ENCODE measurements at regions of chr19 and their contacts with region 1.

Region 1: GRCh38 chr19:50922317-50922853 is 11.2 kb upstream of the KLK4 start:
- DNase-seq: peak; percentile 89
- CTCF ChIP-seq: peak; percentile 89

Region 2: GRCh38 chr19:50669302-50670101 is 252.9 kb before region 1 on chr19:
- CTCF ChIA-PET with region 1: interaction called, 14 read pairs
- POLR2A ChIA-PET with region 1: no interaction called
- DNase-seq: peak; percentile 59
- CTCF ChIP-seq: peak; percentile 64

Region 3: DNA sequence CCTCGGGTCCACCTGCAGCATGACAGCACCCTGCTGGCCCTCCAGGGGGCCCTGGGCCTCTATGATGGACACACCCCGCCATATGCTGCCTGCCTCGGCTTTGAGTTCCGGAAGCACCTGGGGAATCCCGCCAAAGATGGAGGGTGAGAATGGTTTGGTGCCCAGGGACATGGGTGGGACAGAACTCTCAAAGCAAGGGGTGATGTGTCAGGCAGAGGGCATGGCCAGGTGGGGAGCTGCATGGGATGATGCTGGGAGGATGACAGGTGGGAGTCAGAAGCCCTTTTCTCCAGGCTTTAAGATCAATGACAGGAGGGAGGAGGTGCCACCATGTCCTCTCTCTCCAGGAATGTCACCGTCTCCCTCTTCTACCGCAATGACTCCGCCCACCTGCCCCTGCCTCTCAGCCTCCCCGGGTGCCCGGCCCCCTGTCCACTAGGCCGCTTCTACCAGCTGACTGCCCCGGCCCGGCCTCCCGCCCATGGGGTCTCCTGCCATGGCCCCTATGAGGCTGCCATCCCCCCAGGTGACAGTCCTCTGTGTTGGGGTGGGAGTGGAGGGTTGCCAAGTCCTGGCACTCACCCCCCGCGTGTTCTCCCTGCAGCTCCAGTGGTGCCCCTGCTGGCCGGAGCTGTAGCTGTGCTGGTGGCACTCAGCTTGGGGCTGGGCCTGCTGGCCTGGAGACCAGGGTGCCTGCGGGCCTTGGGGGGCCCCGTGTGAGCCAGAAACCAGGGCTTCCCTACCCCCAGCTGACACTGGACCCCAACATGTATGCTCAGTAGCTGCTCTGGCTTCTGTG is 127.7 kb before region 1 on chr19:
- CTCF ChIA-PET with region 1: interaction called, 64 read pairs
- POLR2A ChIA-PET with region 1: interaction called, 6 read pairs
- DNase-seq: peak; percentile 72
- CTCF ChIP-seq: peak; percentile 50

Region 4: GRCh38 chr19:50817941-50818858 is 104.2 kb before region 1 on chr19:
- CTCF ChIA-PET with region 1: interaction called, 13 read pairs
- POLR2A ChIA-PET with region 1: no interaction called
- DNase-seq: peak; percentile 92
- CTCF ChIP-seq: no peak

Region 5: DNA sequence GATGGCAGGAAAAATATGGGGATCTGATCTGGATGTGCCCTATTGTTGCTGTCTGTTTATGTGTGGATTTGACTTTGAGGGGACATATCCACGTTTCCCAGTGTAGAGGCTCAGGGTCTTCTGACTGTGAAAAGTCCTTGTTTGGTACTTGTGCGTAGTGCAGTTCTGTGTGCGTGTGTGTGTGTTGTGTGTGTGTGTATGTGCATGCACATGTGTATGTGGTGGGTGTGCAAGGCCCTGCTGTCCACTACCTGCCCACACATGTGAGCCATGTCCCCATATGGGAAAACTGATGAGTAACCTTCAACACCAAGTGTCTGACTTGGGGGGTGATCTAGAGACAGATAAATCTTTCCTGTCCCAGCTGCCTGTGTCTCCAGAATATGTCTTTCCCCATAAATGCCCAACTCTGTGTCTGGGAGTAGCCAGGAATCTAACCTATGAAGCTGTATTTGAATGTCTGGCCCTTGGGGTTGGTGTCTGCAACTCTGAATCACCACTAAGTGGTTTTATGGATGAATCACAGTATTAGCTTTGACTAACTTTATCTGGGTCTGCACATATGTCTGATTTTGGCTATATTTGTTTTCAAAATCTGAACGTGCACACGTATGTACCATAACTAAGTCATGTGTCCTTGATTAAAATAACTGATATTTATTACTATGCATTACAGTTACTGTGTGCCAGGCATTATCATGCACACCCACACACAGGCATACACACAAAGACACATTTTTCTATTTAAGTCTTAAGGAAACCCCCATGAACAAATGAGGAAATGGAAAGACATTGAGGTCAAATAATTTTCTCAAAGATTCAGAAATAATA is 31.7 kb before region 1 on chr19:
- CTCF ChIA-PET with region 1: interaction called, 10 read pairs
- POLR2A ChIA-PET with region 1: no interaction called
- DNase-seq: no peak
- CTCF ChIP-seq: no peak

Region 6: DNA sequence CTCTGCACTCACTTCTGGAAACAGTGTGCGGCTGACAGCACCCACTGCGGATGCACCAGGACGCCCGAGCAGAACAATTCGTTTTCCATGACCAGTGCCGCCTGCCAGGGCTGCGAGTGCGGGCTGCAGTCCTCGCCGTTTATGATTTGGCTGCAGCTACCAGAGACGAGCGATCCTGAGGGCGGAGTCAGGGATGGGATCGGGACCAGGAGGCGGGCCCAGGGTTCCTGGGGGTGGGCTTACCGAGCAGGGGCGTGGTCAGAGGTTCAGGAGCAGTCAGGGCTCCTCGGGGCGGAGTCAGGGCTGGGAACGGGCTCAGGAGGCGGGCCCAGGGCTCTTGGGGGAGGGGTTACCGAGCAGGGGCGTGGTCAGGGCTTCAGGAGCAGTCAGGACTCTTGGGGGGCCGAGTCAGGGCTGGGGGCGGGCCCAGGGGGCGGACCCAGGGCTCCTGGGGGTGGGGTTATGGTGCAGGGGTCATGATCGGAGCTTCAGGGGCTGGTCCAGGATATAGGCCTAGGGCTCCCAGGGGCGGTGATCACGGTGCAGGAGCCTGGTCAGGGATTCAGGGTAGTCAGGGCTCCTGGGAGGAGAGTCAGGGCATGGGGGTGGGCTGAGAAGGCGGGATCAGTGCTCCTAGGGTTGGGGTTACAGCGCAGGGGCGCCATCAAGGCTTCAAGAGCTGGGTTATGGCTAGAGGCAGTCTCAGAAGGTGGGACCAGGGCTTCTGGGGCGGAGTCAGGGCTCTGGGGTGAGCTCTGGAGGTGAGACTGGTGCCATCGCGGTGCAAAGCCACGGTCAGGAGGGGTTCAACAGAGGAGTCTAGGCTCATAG is 12.9 kb before region 1 on chr19:
- CTCF ChIA-PET with region 1: interaction called, 31 read pairs
- POLR2A ChIA-PET with region 1: no interaction called
- DNase-seq: peak; percentile 88
- CTCF ChIP-seq: no peak

Region 7: DNA sequence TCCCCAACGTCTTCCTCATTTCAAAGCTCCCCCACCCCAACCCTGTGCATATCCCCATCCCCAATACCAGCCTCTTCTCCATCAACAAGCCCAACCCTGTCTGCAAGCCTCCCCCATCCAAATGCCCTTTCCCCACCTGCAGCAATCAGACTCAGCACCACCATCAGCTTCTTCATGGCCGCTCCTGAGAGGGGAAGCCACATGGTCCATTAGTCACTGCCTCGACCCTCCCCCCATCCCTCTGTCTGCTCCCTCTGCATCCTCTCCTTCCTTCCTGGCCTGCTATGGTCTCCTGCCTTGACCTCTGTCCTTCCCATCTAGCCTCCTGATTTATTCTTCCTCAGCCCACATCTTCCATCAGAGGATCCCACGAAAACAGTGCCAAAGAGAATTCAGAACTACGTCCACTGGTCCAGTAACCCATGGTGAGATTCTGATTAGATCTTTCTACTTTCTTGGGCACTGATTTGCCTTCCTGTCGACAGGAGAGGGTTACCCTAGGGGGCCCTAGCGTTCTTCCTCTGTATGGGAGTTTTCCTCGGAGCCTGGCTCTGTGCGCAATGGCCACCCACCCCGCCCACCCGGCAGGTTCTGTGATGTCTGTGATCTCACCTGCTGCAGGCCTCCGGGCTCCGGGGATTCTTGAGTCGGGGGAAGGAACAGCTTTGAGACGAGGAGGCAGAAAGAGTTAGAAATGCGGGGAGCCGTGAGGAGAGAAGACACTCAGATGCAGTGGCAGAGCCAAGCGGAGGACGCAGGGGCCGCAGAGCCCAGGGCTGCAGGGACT is 45.7 kb after region 1 on chr19:
- CTCF ChIA-PET with region 1: no interaction called
- POLR2A ChIA-PET with region 1: no interaction called
- DNase-seq: no peak
- CTCF ChIP-seq: no peak

Measured in GM10248 (cell line).